ENCODE measurements at regions of chr2 and their contacts with region 1.

Region 1: GRCh38 chr2:112936927-112937232 is 25.9 kb downstream of the IL37 start:
- DNase-seq: no peak
- ATAC-seq: no peak
- H3K4me3 ChIP-seq: no peak overlapping the region
- H3K4me3 Mint-ChIP-seq: no peak overlapping the region
- H3K27ac ChIP-seq: no peak overlapping the region
- H3K27ac Mint-ChIP-seq: peak overlapping the region in 1 of 9 donors; percentile 43
- H3K4me1 ChIP-seq: no peaks in the 10 kb centered on the region
- H3K4me1 Mint-ChIP-seq: peaks cover 0 to 6% (median 0%) of the 10 kb centered on the region in 7 donors
- H3K27me3 ChIP-seq: no peaks in the 10 kb centered on the region
- H3K27me3 Mint-ChIP-seq: peaks cover 0 to 36% (median 0%) of the 10 kb centered on the region in 5 donors

Region 2: GRCh38 chr2:112433932-112434730 is 502.7 kb before region 1 on chr2:
- CTCF ChIA-PET with region 1: no interaction called
- POLR2A ChIA-PET with region 1: no interaction called
- intact Hi-C with region 1: no loop called
- DNase-seq: peak in 1 of 9 donors; percentile 3
- ATAC-seq: no peak
- H3K4me3 ChIP-seq: no peak overlapping the region
- H3K4me3 Mint-ChIP-seq: peak overlapping the region in 4 of 10 donors; percentile 15 to 81 (median 60)
- H3K27ac ChIP-seq: no peak overlapping the region
- H3K27ac Mint-ChIP-seq: peak overlapping the region in 4 of 9 donors; percentile 6 to 84 (median 63)
- H3K4me1 ChIP-seq: no peaks in the 10 kb centered on the region
- H3K4me1 Mint-ChIP-seq: peaks cover 7 to 30% (median 22%) of the 10 kb centered on the region in 7 donors
- H3K27me3 ChIP-seq: no peaks in the 10 kb centered on the region
- H3K27me3 Mint-ChIP-seq: peaks cover 0 to 13% (median 6%) of the 10 kb centered on the region in 5 donors

Region 3: DNA sequence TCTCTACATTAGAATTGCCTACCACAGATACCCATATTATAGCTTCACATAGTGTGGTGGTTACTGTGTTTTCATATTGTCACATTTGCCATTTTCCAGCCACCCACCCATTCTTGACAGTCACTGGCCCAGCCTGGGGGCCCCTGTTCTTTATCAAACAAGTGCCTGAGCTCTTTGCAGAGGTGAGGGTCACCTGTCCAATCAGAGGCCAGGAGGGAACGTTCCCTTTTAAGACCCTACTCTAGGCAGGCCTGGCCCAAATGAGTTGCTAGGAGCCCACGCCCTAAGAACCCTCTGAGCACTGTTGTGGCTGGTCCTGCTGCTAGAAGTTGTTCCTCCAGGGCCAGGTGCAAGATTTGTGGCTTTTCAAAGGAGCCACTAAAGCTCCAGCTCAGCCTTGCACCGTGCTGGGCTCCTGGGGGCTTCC is 20.7 kb before region 1 on chr2:
- CTCF ChIA-PET with region 1: no interaction called
- POLR2A ChIA-PET with region 1: no interaction called
- intact Hi-C with region 1: loop called in 1 of 2 experiments (anchors 2 kb)
- DNase-seq: peak in 1 of 9 donors; percentile 36
- ATAC-seq: peak; percentile 33
- H3K4me3 ChIP-seq: no peak overlapping the region
- H3K4me3 Mint-ChIP-seq: no peak overlapping the region
- H3K27ac ChIP-seq: no peak overlapping the region
- H3K27ac Mint-ChIP-seq: peak overlapping the region in 1 of 9 donors; percentile 77
- H3K4me1 ChIP-seq: peaks cover 0 to 38% of the 10 kb centered on the region in 2 donors
- H3K4me1 Mint-ChIP-seq: peaks cover 0 to 28% (median 5%) of the 10 kb centered on the region in 7 donors
- H3K27me3 ChIP-seq: no peaks in the 10 kb centered on the region
- H3K27me3 Mint-ChIP-seq: peaks cover 0 to 5% (median 3%) of the 10 kb centered on the region in 5 donors